ENCODE measurements at regions of chr15 and their contacts with region 1.

Region 1: GRCh38 chr15:66851226-66852071 is 149.4 kb downstream of the SMAD6 start:
- DNase-seq: peak; percentile 73
- H3K4me3 ChIP-seq: no peak overlapping the region
- H3K27ac ChIP-seq: peak overlapping the region; percentile 45 to 55
- H3K4me1 ChIP-seq: peaks cover 2% of the 10 kb centered on the region
- H3K27me3 ChIP-seq: no peaks in the 10 kb centered on the region
- CTCF ChIP-seq: peak; percentile 88 to 98 (median 94)
- POLR2A ChIP-seq: no peak

Region 2: DNA sequence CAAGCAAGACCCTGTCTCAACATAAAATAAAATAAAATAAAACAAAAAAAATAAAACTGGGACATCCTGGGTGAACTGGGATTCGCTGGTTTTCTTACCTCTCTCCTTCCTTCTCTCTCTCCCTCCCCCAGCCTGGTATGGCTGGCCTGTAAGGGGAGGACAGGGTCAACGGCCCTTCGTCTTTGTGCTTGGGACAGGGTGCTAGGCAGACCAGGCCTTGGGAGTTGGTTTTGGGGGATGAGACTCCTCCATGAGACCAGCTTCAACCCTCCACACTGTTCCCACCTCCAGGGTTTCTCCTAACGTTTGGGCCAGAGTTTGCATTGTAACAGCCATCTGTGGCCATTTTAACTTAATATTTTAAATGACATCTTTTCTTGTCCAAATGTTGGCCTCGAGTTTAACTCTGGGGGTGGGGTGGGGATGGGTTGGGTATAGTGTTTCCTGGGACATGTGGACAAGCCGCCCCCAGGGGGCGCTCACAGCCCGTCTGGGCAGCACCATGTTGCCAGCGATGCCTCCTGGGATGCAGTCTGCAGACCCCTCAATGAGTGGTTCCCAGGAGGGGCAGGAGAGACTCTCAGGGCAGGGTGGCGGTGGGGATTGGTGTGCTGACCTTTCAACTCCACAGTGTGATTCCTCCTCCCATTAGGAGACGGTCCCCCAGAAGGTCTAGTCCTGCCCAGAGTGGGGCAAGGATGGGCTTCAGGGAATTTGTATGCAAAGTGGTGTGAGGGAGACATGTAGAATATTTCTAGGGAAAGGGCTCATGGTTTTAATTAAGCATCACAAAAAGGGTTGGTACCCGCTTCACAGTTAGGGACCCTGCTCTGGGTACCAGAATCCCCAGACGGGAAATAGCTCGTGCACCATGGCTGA is 247.9 kb before region 1 on chr15:
- intact Hi-C with region 1: loop called (anchors 2 kb)
- DNase-seq: peak; percentile 42
- H3K4me3 ChIP-seq: no peak overlapping the region
- H3K27ac ChIP-seq: no peak overlapping the region
- H3K4me1 ChIP-seq: no peaks in the 10 kb centered on the region
- H3K27me3 ChIP-seq: no peaks in the 10 kb centered on the region
- CTCF ChIP-seq: peak; percentile 86 to 96 (median 90)
- POLR2A ChIP-seq: no peak

Region 3: GRCh38 chr15:66619151-66619903 is 232.1 kb before region 1 on chr15:
- intact Hi-C with region 1: loop called (anchors 5 kb)
- DNase-seq: peak; percentile 68
- H3K4me3 ChIP-seq: no peak overlapping the region
- H3K27ac ChIP-seq: peak overlapping the region; percentile 24 to 39
- H3K4me1 ChIP-seq: peaks cover 13% of the 10 kb centered on the region
- H3K27me3 ChIP-seq: no peaks in the 10 kb centered on the region
- CTCF ChIP-seq: peak; percentile 64 to 90 (median 82)
- POLR2A ChIP-seq: no peak

Region 4: DNA sequence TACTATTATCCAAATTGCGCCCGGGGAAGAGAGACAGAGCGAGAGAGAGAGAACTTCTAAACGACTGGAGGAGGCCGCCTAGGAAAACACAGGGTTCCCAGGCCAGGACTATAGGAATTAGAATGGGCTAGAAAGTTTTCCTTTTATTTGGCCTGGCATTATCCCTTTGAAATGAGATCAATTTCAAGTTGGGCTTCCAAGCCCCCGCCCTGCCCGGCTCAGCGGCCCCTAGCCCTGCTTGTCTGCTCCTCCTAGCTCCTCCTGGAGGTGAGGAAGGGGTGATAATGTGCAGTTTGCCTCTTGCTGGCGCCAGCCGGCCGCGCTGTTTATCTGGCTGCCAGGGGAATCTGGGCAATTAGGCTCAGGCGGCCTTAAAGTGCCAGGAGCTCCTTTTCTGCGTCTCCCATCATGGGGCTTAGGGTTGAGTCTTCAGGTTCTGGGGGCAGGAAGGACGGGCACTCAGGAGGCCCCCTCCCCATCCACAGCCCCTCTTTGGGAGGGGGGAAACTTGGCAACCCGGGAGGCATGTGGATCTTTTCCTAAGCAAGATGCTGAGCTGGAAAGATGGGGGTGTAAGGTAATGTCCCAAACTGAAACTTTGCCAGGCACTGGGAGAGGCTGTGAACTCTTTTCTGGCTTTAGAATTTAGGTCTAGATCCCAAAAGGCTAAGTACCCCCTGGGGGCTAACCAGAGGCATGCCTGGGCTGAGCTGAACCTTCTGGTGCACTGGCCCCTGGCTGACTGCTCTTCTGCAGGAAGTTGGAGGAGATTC is 144.0 kb before region 1 on chr15:
- intact Hi-C with region 1: loop called (anchors 2 kb)
- DNase-seq: peak; percentile 46
- H3K4me3 ChIP-seq: no peak overlapping the region
- H3K27ac ChIP-seq: peak overlapping the region; percentile 11 to 30
- H3K4me1 ChIP-seq: no peaks in the 10 kb centered on the region
- H3K27me3 ChIP-seq: no peaks in the 10 kb centered on the region
- CTCF ChIP-seq: peak in 2 of 4 experiments; percentile 20 to 39
- POLR2A ChIP-seq: no peak

Measured in prostate gland (tissue), 2 donors.